Kidney (tissue), 22 donors: ENCODE measurements at regions of chr3 and their contacts with region 1.

Region 1: GRCh38 chr3:15268033-15268631 is 62.1 kb downstream of the CAPN7 start:
- DNase-seq: peak; percentile 83 to 92 (median 89)
- H3K4me3 ChIP-seq: no peak overlapping the region
- H3K27ac ChIP-seq: no peak overlapping the region
- H3K4me1 ChIP-seq: peaks cover 0 to 10% (median 10%) of the 10 kb centered on the region in 3 donors
- H3K27me3 ChIP-seq: no peaks in the 10 kb centered on the region
- CTCF ChIP-seq: peak; percentile 99

Region 2: GRCh38 chr3:14921078-14921616 is 347.0 kb before region 1 on chr3:
- intact Hi-C with region 1: no loop called
- DNase-seq: peak; percentile 88 to 95 (median 92)
- H3K4me3 ChIP-seq: no peak overlapping the region
- H3K27ac ChIP-seq: no peak overlapping the region
- H3K4me1 ChIP-seq: peaks cover 0 to 7% (median 0%) of the 10 kb centered on the region in 3 donors
- H3K27me3 ChIP-seq: no peaks in the 10 kb centered on the region
- CTCF ChIP-seq: peak; percentile 97

Region 3: GRCh38 chr3:14980689-14981088 is 287.4 kb before region 1 on chr3:
- intact Hi-C with region 1: no loop called
- DNase-seq: no peak
- H3K4me3 ChIP-seq: no peak overlapping the region
- H3K27ac ChIP-seq: no peak overlapping the region
- H3K4me1 ChIP-seq: peaks cover 0 to 8% (median 0%) of the 10 kb centered on the region in 3 donors
- H3K27me3 ChIP-seq: no peaks in the 10 kb centered on the region
- CTCF ChIP-seq: no peak

Region 4: DNA sequence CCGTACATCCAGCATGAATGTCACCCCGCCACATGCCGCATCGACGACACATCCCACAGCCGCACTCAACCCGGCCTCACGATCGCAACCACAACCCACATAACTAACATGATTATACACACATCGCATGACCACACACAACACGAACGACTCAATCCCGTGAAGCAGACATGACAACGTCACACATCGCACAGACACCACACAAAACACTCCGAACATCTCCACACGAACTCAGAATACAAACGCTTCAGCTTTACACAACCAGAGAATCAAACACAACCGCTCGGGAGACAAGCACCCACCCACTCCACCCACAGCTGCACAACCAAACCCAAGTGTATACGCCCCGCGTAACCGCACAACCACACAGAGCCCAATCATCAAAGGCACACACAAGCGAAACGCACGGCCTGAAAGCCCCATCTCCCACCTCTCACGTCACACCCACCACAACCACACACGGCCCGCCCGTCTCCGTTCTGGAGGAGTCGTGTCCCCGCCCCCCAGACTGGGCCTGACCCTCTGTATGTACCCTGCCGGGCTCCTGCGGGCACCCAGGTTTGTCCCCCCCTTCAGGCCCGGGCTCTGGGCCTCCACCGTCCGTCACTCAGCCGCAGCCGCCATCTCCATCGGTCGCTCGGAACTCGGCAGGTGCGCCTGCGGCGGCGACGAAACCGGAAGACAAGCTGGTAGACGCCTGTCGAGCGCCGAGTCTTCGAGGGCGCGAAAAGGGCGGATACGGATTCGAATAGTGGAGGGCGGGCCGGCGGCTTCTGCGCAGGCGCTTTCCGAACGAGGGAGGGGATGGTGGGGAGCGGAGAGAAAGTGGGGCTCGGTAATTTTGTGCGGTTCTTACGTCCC is 169.4 kb before region 1 on chr3 and contains the start of gene RBSN:
- intact Hi-C with region 1: no loop called
- DNase-seq: peak; percentile 96 to 99 (median 97)
- H3K4me3 ChIP-seq: peak within 1 kb of the TSS; percentile 93 to 100 (median 99)
- H3K27ac ChIP-seq: peak within 1 kb of the TSS; percentile 63 to 85
- H3K4me1 ChIP-seq: peaks cover 0 to 15% (median 5%) of the 10 kb centered on the region in 3 donors
- H3K27me3 ChIP-seq: no peaks in the 10 kb centered on the region
- CTCF ChIP-seq: no peak
- total RNA-seq, gene RBSN: 24.0 TPM

Region 5: GRCh38 chr3:15332405-15333098 is 64.4 kb after region 1 on chr3 and contains the start of gene SH3BP5:
- intact Hi-C with region 1: loop called (anchors 10 kb)
- DNase-seq: peak; percentile 86 to 92 (median 90)
- H3K4me3 ChIP-seq: peak within 1 kb of the TSS; percentile 74 to 89 (median 88)
- H3K27ac ChIP-seq: peak within 1 kb of the TSS; percentile 82 to 84
- H3K4me1 ChIP-seq: peaks cover 6 to 13% (median 10%) of the 10 kb centered on the region in 3 donors
- H3K27me3 ChIP-seq: no peaks in the 10 kb centered on the region
- CTCF ChIP-seq: peak; percentile 51
- total RNA-seq, gene SH3BP5: 109 TPM

Region 6: DNA sequence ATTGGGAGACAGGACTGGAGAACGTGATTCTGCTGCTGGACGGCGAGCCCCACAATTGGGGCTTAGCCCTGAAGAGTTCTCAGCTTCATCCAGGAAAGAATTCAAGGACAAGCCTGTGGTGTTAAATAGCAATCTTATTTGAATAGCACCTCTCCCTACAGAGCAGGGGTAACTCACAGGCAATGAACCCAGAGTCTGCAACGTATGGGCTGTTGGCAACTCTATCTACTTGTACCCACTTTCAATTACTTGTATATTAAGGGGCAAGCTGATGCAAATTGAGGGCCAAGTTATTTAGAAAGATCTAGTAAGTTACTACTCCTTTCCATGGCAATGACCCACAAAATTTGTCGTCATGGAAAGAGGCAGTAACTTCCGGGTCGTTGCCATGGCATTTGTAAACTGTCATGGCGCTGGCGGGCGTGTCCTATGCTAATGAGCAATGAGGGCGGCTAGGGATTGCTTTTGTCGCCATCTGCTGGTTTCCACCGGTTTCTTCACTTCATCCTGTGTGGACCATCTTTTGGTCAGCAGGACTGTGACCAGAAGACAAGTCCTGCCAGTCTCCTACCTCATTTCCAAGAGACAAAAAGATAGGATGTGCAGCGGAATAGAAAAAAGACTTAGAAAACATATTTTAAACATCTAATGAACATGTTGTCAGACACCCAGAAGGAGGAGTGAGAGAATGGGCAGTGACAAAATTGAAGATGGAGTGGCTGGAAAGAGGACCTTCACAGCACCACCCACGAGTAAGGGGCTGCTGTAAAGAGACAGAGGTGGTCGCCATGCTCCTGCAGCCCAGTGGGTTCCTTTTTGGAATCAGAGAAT is 110.0 kb after region 1 on chr3:
- intact Hi-C with region 1: loop called (anchors 5 kb)
- DNase-seq: peak; percentile 95 to 98 (median 96)
- H3K4me3 ChIP-seq: peak overlapping the region; percentile 43 to 58 (median 57)
- H3K27ac ChIP-seq: peak overlapping the region; percentile 70 to 73
- H3K4me1 ChIP-seq: peaks cover 2 to 4% (median 3%) of the 10 kb centered on the region in 3 donors
- H3K27me3 ChIP-seq: no peaks in the 10 kb centered on the region
- CTCF ChIP-seq: peak; percentile 89

Region 7: DNA sequence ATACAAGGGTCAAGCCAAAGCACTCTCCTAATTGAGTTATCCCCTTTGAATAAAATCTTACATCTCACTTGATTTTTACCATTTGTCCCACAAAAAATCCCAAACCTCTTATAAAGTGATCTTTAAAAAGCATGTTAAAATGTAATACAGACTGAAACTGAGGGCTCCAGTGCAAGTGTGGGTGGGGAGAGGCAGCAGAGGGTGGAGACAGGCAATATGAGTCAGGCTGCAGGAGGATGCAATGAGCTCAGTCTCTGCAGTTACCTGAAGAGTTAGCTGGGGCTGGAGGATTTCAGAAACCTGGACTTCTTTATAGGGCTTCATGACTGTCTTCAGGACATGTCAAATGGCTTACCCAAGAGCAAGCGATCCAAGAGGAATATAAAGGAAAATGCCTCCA is 267.6 kb after region 1 on chr3:
- intact Hi-C with region 1: no loop called
- DNase-seq: no peak
- H3K4me3 ChIP-seq: no peak overlapping the region
- H3K27ac ChIP-seq: no peak overlapping the region
- H3K4me1 ChIP-seq: no peaks in the 10 kb centered on the region
- H3K27me3 ChIP-seq: no peaks in the 10 kb centered on the region
- CTCF ChIP-seq: no peak